Motor neuron (in vitro differentiated cells): ENCODE measurements at regions of chr12 and their contacts with region 1.

Region 1: GRCh38 chr12:38332814-38333213 is 16.2 kb downstream of the ALG10B start:
- ATAC-seq: no peak
- H3K4me3 ChIP-seq: no peak overlapping the region
- H3K27ac ChIP-seq: no peak overlapping the region
- H3K4me1 ChIP-seq: no peaks in the 10 kb centered on the region

Region 2: DNA sequence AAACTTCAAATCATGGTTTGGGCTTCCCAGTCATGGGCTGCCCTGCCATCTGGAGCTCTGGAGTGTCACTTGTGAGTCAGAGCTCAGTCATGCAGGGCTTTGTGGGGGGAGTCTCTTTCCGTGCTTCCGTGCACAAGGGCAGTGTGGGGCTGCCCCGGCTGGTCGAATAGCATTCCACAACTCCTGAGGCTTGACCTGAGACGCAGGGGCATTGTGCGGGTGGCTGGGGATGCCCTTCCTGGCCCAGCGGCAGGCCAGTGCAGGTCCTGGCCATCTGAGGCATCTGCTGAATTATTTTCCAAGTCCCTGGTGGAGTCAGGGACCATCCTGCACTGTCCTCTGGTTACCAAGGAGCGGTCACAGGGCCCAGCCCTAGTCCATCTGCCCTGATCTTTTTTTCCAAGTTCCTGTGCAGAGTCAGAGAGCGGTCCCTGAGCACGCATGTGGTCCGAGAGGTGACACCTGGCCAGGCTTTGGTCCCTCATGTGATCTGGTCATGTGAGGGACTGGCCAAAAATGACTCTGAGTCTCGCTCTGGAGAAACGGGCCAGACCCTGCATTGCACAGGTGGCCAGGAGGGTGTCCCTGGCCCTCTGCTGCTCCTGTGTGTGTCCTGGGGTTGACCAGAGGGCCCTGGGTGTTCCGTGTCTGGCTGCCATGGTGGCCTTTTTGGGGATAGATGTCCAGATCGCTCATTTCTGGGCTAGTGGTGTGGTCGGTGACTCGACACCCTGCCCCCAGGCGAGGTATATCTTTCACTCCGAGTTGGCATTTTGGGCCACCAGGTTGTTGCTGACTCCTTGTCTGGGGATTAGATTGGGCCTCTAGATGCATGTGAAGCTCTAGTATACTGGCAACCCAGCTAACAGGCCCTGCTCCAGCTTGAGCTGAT is 183.2 kb before region 1 on chr12:
- in situ Hi-C with region 1: no loop called
- ATAC-seq: no peak
- H3K4me3 ChIP-seq: no peak overlapping the region
- H3K27ac ChIP-seq: no peak overlapping the region
- H3K4me1 ChIP-seq: no peaks in the 10 kb centered on the region

Region 3: DNA sequence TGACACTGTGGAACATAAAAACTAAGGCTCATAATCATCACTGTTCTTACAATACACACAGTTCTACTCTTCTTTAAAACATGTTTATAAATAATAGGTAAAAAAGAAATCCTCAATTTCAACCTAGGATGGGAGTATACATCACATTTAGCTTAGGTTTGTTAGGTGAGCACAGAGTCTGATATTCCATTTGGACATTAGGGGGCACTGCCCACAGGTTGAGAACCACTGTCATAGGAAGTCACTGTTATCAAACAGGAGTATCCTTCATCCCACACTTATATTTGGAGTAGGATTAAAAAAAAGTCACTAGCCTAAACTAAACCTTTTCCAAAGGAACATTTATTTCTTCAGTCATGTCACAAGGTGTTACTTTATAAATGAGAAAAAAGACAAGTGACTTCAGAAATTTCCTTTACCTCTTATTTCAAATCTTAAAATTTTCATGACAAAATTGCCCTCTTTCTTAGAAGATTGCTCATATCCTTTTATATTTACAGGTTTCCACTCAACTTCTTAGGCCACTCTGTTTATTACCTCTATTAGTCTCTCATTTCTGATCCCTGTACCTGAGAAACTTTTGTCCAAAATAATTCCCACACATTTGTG is 332.0 kb after region 1 on chr12:
- in situ Hi-C with region 1: loop called in 1 of 9 experiments (anchors 25 kb)
- ATAC-seq: peak in 3 of 8 experiments; percentile 46 to 66 (median 62)
- H3K4me3 ChIP-seq: no peak overlapping the region
- H3K27ac ChIP-seq: no peak overlapping the region
- H3K4me1 ChIP-seq: peaks cover 0 to 5% of the 10 kb centered on the region in 2 donors

Region 4: DNA sequence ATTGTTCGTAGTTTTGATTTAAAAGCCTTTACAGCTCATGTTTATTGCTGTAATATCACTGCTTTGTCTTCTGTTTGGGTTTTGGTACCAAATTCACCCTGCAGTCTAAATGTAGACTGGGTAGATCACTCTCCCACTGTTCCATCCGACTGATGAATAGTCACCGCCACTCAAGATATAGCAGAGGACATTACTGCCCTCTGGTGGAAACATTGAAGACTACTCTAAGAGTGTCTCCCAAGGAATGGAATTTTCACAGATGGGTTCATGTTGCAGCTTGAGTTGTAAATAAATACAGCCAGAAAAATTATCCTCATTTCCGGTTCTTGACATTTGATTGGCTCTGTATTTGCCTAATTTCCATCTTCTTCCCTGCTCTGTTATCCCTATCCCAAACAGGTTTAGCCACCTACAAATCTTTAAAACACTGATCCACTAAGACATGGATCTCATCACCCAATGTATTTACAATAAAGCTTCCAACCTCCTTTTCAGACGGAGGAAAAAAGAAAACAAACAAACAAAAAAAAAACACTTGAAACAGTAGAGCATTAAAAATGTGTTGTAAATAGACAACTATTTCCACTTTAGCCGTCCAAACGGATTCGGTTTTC is 770.8 kb after region 1 on chr12:
- in situ Hi-C with region 1: loop called in 4 of 9 experiments (anchors 25 kb)
- ATAC-seq: peak; percentile 74 to 98 (median 88)
- H3K4me3 ChIP-seq: no peak overlapping the region
- H3K27ac ChIP-seq: no peak overlapping the region
- H3K4me1 ChIP-seq: no peaks in the 10 kb centered on the region

Region 5: GRCh38 chr12:39272871-39273770 is 940.3 kb after region 1 on chr12:
- in situ Hi-C with region 1: loop called in 3 of 9 experiments (anchors 25 kb)
- ATAC-seq: peak; percentile 25 to 87 (median 58)
- H3K4me3 ChIP-seq: no peak overlapping the region
- H3K27ac ChIP-seq: no peak overlapping the region
- H3K4me1 ChIP-seq: peaks cover 5 to 7% of the 10 kb centered on the region in 2 donors